ENCODE measurements at regions of chr14 and their contacts with region 1.

Region 1: GRCh38 chr14:76962303-76962660 is 66.2 kb downstream of the IRF2BPL start:
- DNase-seq: no peak
- ATAC-seq: peak; percentile 7; the same call in 2 of the 3 replicates
- H3K4me3 ChIP-seq: peak overlapping the region; percentile 53 to 60 (median 57)
- H3K27ac ChIP-seq: peak overlapping the region; percentile 88
- H3K4me1 ChIP-seq: peaks cover 87% of the 10 kb centered on the region
- H3K27me3 ChIP-seq: no peaks in the 10 kb centered on the region
- CTCF ChIP-seq: no peak
- EP300 ChIP-seq: no peak
- POLR2A ChIP-seq: no peak
- RAD21 ChIP-seq: no peak

Region 2: DNA sequence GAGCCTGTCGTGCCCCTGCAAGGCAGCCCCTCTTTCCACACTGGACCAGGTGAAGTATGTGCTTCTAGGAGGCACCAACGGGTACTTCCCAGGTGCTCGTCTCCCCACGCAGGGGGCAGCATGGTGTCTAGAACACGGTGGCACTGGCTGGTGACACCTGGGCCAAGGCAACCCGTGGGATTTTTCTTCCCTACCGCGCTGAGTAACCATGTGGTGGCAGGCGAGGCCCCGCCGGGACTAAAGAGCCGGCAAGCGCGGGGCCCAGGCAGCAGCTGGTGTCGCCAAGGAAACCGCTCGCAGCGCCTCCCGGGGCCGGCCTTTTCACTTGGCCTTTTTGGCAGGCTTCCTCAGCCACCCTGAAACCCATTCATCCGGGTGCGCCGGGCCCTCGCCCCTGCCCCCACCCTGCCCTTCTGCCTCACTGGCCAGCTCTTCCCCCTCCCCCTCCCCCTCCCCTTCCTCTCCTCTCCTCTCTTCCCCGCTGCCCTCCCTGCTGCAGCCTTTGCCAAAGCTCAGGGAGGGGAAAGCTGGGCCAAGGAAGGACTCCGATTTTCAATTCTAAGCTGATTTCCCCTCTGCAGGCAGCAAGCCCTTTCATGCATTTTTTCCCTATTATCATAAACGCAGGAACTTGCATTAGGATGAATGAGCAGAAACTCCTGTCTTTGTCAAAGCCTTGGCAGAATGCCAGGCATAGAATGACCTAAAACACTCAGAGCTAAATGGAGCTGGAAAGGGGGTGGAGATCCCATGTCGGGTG is 15.0 kb before region 1 on chr14:
- CTCF ChIA-PET with region 1: no interaction called
- POLR2A ChIA-PET with region 1: interaction called, 31 read pairs
- in situ Hi-C with region 1: no loop called
- intact Hi-C with region 1: no loop called
- DNase-seq: peak; percentile 74
- ATAC-seq: peak; percentile 92
- H3K4me3 ChIP-seq: peak overlapping the region; percentile 12 to 68 (median 27); a peak in 4 of 6 replicates
- H3K27ac ChIP-seq: no peak overlapping the region
- H3K4me1 ChIP-seq: peaks cover 79% of the 10 kb centered on the region
- H3K27me3 ChIP-seq: no peaks in the 10 kb centered on the region
- CTCF ChIP-seq: peak; percentile 82
- EP300 ChIP-seq: no peak
- POLR2A ChIP-seq: no peak
- RAD21 ChIP-seq: peak; percentile 90

Region 3: GRCh38 chr14:76977793-76978720 is 15.8 kb after region 1 on chr14:
- CTCF ChIA-PET with region 1: no interaction called
- POLR2A ChIA-PET with region 1: interaction called, 12 read pairs
- in situ Hi-C with region 1: no loop called
- intact Hi-C with region 1: no loop called
- DNase-seq: peak; percentile 52
- ATAC-seq: peak; percentile 71
- H3K4me3 ChIP-seq: peak overlapping the region in 1 of 3 experiments; percentile 28; a peak in 2 of 6 replicates
- H3K27ac ChIP-seq: no peak overlapping the region
- H3K4me1 ChIP-seq: peaks cover 44% of the 10 kb centered on the region
- H3K27me3 ChIP-seq: 0 out of 5 replicates have a peak, but pooled peaks cover 0 to 3% of the 10 kb centered on the region in 2 experiments
- CTCF ChIP-seq: no peak
- EP300 ChIP-seq: no peak
- POLR2A ChIP-seq: no peak
- RAD21 ChIP-seq: no peak

Region 4: GRCh38 chr14:77007975-77008421 is 45.7 kb after region 1 on chr14:
- CTCF ChIA-PET with region 1: no interaction called
- POLR2A ChIA-PET with region 1: no interaction called
- in situ Hi-C with region 1: no loop called
- intact Hi-C with region 1: no loop called
- DNase-seq: no peak
- ATAC-seq: no peak
- H3K4me3 ChIP-seq: no peak overlapping the region
- H3K27ac ChIP-seq: no peak overlapping the region
- H3K4me1 ChIP-seq: peaks cover 51% of the 10 kb centered on the region
- H3K27me3 ChIP-seq: peaks cover 0 to 38% of the 10 kb centered on the region in 2 experiments; a peak in 3 of 5 replicates
- CTCF ChIP-seq: no peak
- EP300 ChIP-seq: no peak
- POLR2A ChIP-seq: no peak
- RAD21 ChIP-seq: no peak

Region 5: GRCh38 chr14:77028384-77029231 is 66.3 kb after region 1 on chr14 and contains the start of gene IRF2BPL:
- CTCF ChIA-PET with region 1: no interaction called
- POLR2A ChIA-PET with region 1: interaction called, 16 read pairs
- in situ Hi-C with region 1: no loop called
- intact Hi-C with region 1: no loop called
- DNase-seq: peak; percentile 94
- ATAC-seq: peak; percentile 53
- H3K4me3 ChIP-seq: peak within 1 kb of the TSS; percentile 82 to 85 (median 85)
- H3K27ac ChIP-seq: peak within 1 kb of the TSS; percentile 94
- H3K4me1 ChIP-seq: peaks cover 79% of the 10 kb centered on the region
- H3K27me3 ChIP-seq: no peaks in the 10 kb centered on the region
- CTCF ChIP-seq: no peak; the same call in 1 of the 2 replicates
- EP300 ChIP-seq: peak in 1 of 2 experiments; percentile 79; a peak in 3 of 4 replicates
- POLR2A ChIP-seq: peak; percentile 87 to 90
- RAD21 ChIP-seq: peak; percentile 47
- total RNA-seq, gene IRF2BPL: 6.2 and 8.4 TPM in 2 replicates

Region 6: DNA sequence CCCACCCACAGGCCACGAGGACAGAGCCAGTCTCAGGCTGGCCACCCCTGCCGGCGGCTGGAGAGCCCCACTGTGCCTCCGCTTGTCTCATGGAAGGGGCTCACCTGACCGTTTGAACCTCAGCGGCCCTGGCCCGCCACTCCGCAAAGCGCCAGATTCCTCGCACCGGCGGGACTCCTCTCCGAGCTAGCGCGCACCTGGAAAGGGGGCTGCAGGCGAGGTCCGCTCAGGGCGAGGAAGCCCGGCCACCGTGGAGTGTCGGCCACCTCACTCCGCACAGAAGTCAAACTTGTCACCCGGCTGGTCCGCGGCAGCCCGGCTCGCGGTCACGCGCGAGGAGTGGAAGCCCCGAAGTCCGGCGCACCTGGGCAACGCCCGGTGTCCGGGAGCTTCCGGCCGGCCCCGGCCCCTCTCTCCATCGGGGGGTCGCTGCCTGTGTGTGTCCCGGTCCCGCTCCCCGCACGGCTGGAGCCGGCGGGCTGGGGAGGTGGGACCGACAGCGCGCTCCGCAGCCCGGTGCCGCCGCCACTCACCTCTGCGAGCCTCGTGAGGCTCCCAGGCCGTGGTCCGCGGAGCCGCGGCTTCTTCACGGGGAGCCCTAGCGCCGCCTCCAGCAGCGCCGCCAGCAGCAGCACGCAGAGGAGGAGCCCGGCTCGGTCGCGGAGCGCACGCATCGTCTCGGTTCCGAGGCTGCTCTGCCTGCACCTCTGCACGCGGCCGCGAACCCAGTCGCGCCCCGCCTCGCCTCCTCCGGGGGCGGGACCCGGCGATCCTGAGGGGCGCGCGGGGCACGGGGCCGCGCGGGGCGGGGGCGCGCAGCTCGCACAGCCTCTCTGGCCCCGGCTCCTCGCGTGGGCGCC is 536.1 kb after region 1 on chr14 and contains the start of gene ISM2:
- CTCF ChIA-PET with region 1: no interaction called
- POLR2A ChIA-PET with region 1: no interaction called
- in situ Hi-C with region 1: no loop called
- intact Hi-C with region 1: loop called (anchors 5 kb)
- DNase-seq: peak; percentile 44
- ATAC-seq: peak; percentile 82
- H3K4me3 ChIP-seq: peak within 1 kb of the TSS; percentile 69 to 88 (median 84)
- H3K27ac ChIP-seq: peak within 1 kb of the TSS; percentile 74
- H3K4me1 ChIP-seq: peaks cover 60% of the 10 kb centered on the region
- H3K27me3 ChIP-seq: no peaks in the 10 kb centered on the region; a peak in 1 of 5 replicates
- CTCF ChIP-seq: no peak
- EP300 ChIP-seq: no peak
- POLR2A ChIP-seq: peak in 1 of 2 experiments; percentile 94; a peak in 2 of 4 replicates
- RAD21 ChIP-seq: no peak; the same call in 1 of the 2 replicates
- total RNA-seq, gene ISM2: 0.83 and 1.8 TPM in 2 replicates